A549 (cell line): ENCODE measurements at regions of chr18 and their contacts with region 1.

Region 1: GRCh38 chr18:45664824-45665763 is 49.8 kb downstream of the SLC14A2 start:
- DNase-seq: peak; percentile 46 to 51
- ATAC-seq: peak; percentile 69 to 89; a peak in 5 of 6 replicates
- H3K4me3 ChIP-seq: no peak overlapping the region
- H3K27ac ChIP-seq: no peak overlapping the region
- H3K4me1 ChIP-seq: no peaks in the 10 kb centered on the region
- CTCF ChIP-seq: peak; percentile 71
- EP300 ChIP-seq: no peak
- POLR2A ChIP-seq: no peak
- RAD21 ChIP-seq: peak; percentile 82

Region 2: GRCh38 chr18:45793306-45793965 is 128.3 kb after region 1 on chr18:
- CTCF ChIA-PET with region 1: no interaction called
- POLR2A ChIA-PET with region 1: no interaction called
- DNase-seq: peak; percentile 66 to 83
- ATAC-seq: peak; percentile 94 to 100
- H3K4me3 ChIP-seq: no peak overlapping the region
- H3K27ac ChIP-seq: peak overlapping the region; percentile 78 to 86
- H3K4me1 ChIP-seq: peaks cover 15% of the 10 kb centered on the region
- CTCF ChIP-seq: no peak
- EP300 ChIP-seq: peak; percentile 53 to 67; a peak in 3 of 5 replicates
- POLR2A ChIP-seq: no peak
- RAD21 ChIP-seq: no peak; a peak in 1 of 5 replicates

Region 3: DNA sequence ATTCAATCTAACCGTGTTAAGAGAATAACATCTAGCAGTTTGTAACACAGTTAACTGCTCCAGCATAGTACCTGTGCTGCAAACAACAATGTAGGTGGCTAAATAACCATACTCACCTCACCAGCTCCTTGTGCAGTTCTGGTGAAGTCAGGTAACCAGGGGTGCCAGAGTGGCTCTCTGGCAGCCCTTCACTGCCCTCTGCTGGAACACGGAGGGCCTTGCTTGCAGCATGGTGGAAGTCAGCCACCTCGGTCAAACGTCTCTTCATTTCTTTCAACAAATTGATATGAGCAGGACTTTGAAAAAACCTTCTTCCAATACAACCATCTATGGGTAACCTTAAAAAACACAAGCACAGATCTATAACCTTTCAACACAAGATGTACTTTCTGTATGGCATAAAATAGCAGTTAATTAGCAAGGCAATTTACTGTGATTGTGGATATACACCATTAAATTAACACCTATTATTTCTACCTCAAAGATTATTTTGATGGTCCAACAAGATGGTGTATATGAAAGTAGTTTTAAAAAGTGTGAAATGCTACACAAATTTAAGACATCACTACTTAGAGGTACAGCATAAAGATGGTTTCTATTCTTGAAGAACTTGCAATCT is 245.4 kb after region 1 on chr18:
- CTCF ChIA-PET with region 1: interaction called, 15 read pairs
- POLR2A ChIA-PET with region 1: no interaction called
- DNase-seq: peak; percentile 46 to 53
- ATAC-seq: peak; percentile 81 to 90; a peak in 5 of 6 replicates
- H3K4me3 ChIP-seq: no peak overlapping the region
- H3K27ac ChIP-seq: no peak overlapping the region
- H3K4me1 ChIP-seq: no peaks in the 10 kb centered on the region
- CTCF ChIP-seq: peak; percentile 64
- EP300 ChIP-seq: no peak
- POLR2A ChIP-seq: no peak
- RAD21 ChIP-seq: peak; percentile 66 to 74

Region 4: DNA sequence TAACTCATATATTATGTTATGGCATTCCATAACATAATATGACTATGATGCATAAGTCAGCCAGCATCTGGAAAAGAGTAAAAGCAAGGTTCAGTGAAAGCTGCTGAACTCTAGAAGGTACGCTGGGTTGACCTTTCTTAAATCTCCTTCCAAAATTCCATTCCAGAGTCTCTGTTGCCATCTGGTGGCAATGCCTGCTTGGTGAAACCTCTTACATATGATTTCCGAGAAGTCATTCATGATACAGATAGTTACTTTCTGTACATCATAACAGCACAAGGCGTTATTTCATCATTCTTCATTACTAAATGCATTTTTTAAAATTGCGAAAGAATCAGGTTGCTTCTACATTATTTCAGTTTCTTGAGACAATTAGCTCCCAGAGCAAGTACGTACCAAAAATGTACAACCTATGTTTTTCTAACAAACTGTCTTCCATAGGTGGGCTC is 309.0 kb after region 1 on chr18:
- CTCF ChIA-PET with region 1: interaction called, 15 read pairs
- POLR2A ChIA-PET with region 1: no interaction called
- DNase-seq: peak; percentile 21 to 74
- ATAC-seq: peak; percentile 85 to 94
- H3K4me3 ChIP-seq: peak overlapping the region; percentile 38
- H3K27ac ChIP-seq: peak overlapping the region in 1 of 2 experiments; percentile 37; a peak in 4 of 6 replicates
- H3K4me1 ChIP-seq: no peaks in the 10 kb centered on the region
- CTCF ChIP-seq: peak; percentile 79
- EP300 ChIP-seq: no peak
- POLR2A ChIP-seq: no peak
- RAD21 ChIP-seq: peak; percentile 79 to 89

Region 5: DNA sequence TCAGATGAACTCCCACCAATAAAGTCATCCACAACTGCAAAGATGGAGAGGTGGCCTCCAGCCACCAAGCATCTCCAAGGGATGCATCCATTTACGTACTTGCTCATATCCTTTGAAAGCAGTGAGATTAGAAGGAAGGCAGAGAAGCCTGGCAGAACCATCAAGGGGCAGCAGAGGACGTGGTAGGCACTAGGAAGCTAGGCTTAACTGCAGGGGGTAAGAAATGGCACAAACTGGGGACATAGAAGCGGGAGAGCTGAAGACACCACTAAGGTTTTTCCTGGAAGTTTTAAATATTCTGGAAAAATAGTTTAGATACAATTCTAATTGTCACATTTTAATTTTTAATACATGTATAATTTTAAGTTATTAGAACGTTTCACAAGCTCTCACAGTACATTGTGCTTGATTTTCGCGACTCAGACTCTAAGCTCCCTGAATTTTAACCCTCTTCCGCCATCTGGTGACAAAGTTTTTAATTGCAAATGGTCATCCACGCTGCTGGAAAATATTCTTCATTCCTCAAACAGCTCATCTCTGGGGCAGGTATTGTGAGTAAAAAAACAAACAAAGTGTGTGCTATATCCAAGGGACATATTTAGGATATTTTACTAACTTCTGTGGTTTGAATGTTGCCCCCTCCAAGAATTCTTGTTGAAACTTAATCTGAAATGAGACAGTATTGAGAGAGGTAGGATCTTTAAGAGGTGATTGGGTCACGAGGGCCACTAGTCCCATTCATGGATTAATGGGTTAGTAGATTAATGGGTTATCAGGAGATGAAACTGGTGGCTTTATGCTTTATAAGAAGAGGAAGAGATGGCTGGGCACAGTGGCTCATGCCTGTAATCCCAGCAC is 408.6 kb after region 1 on chr18:
- CTCF ChIA-PET with region 1: interaction called, 10 read pairs
- POLR2A ChIA-PET with region 1: no interaction called
- DNase-seq: peak in 1 of 2 experiments; percentile 55
- ATAC-seq: peak; percentile 55 to 81
- H3K4me3 ChIP-seq: no peak overlapping the region
- H3K27ac ChIP-seq: no peak overlapping the region
- H3K4me1 ChIP-seq: 0 out of 3 replicates have a peak, but pooled peaks cover 3% of the 10 kb centered on the region
- CTCF ChIP-seq: peak; percentile 58
- EP300 ChIP-seq: no peak
- POLR2A ChIP-seq: no peak
- RAD21 ChIP-seq: peak; percentile 62 to 63